CD8-positive, alpha-beta T cell (primary cell): ENCODE measurements at regions of chr1 and their contacts with region 1.

Region 1: GRCh38 chr1:109263597-109264398 is 14.5 kb downstream of the CELSR2 start:
- DNase-seq: peak; percentile 54 to 81 (median 75)
- ATAC-seq: peak; percentile 97
- H3K4me3 ChIP-seq: no peak overlapping the region
- H3K4me3 Mint-ChIP-seq: no peak overlapping the region
- H3K27ac ChIP-seq: no peak overlapping the region
- H3K27ac Mint-ChIP-seq: no peak overlapping the region
- H3K4me1 ChIP-seq: no peaks in the 10 kb centered on the region
- H3K4me1 Mint-ChIP-seq: no peaks in the 10 kb centered on the region
- H3K27me3 ChIP-seq: no peaks in the 10 kb centered on the region
- H3K27me3 Mint-ChIP-seq: no peaks in the 10 kb centered on the region
- CTCF ChIP-seq: peak; percentile 99

Region 2: GRCh38 chr1:109248797-109249642 is 14.8 kb before region 1 on chr1 and contains the start of gene CELSR2:
- CTCF ChIA-PET with region 1: interaction called, 21 read pairs
- POLR2A ChIA-PET with region 1: no interaction called
- intact Hi-C with region 1: no loop called
- DNase-seq: peak; percentile 21 to 83 (median 57)
- ATAC-seq: peak; percentile 97
- H3K4me3 ChIP-seq: peak within 1 kb of the TSS; percentile 39 to 41
- H3K4me3 Mint-ChIP-seq: peak within 1 kb of the TSS; percentile 72
- H3K27ac ChIP-seq: no peak within 1 kb of the TSS
- H3K27ac Mint-ChIP-seq: no peak within 1 kb of the TSS
- H3K4me1 ChIP-seq: peaks cover 14% of the 10 kb centered on the region
- H3K4me1 Mint-ChIP-seq: peaks cover 14% of the 10 kb centered on the region
- H3K27me3 ChIP-seq: peaks cover 0 to 3% of the 10 kb centered on the region in 2 experiments
- H3K27me3 Mint-ChIP-seq: peaks cover 8% of the 10 kb centered on the region
- CTCF ChIP-seq: no peak
- total RNA-seq, gene CELSR2: 3.8 TPM

Region 3: GRCh38 chr1:109371456-109371799 is 107.6 kb after region 1 on chr1:
- CTCF ChIA-PET with region 1: no interaction called
- POLR2A ChIA-PET with region 1: no interaction called
- intact Hi-C with region 1: no loop called
- DNase-seq: no peak
- ATAC-seq: no peak
- H3K4me3 ChIP-seq: no peak overlapping the region
- H3K4me3 Mint-ChIP-seq: no peak overlapping the region
- H3K27ac ChIP-seq: no peak overlapping the region
- H3K27ac Mint-ChIP-seq: no peak overlapping the region
- H3K4me1 ChIP-seq: no peaks in the 10 kb centered on the region
- H3K4me1 Mint-ChIP-seq: peaks cover 13% of the 10 kb centered on the region
- H3K27me3 ChIP-seq: peaks cover 0 to 5% of the 10 kb centered on the region in 2 experiments
- H3K27me3 Mint-ChIP-seq: peaks cover 9% of the 10 kb centered on the region
- CTCF ChIP-seq: no peak

Region 4: GRCh38 chr1:109397538-109398342 is 133.9 kb after region 1 on chr1 and contains the start of gene SORT1:
- CTCF ChIA-PET with region 1: interaction called, 87 read pairs
- POLR2A ChIA-PET with region 1: no interaction called
- intact Hi-C with region 1: loop called (anchors 1 kb)
- DNase-seq: peak; percentile 25 to 84 (median 71)
- ATAC-seq: peak; percentile 97
- H3K4me3 ChIP-seq: peak within 1 kb of the TSS; percentile 49 to 53
- H3K4me3 Mint-ChIP-seq: peak within 1 kb of the TSS; percentile 83
- H3K27ac ChIP-seq: no peak within 1 kb of the TSS
- H3K27ac Mint-ChIP-seq: no peak within 1 kb of the TSS
- H3K4me1 ChIP-seq: peaks cover 9% of the 10 kb centered on the region
- H3K4me1 Mint-ChIP-seq: peaks cover 15% of the 10 kb centered on the region
- H3K27me3 ChIP-seq: peaks cover 10 to 21% of the 10 kb centered on the region in 2 experiments
- H3K27me3 Mint-ChIP-seq: peaks cover 34% of the 10 kb centered on the region
- CTCF ChIP-seq: no peak
- total RNA-seq, gene SORT1: 0.61 to 0.73 TPM

Region 5: GRCh38 chr1:109493805-109494539 is 230.2 kb after region 1 on chr1 and contains the start of gene CYB561D1:
- CTCF ChIA-PET with region 1: interaction called, 8 read pairs
- POLR2A ChIA-PET with region 1: no interaction called
- intact Hi-C with region 1: loop called in 1 of 2 experiments (anchors 5 kb)
- DNase-seq: peak; percentile 79 to 95 (median 88)
- ATAC-seq: peak; percentile 90
- H3K4me3 ChIP-seq: peak within 1 kb of the TSS; percentile 94 to 95
- H3K4me3 Mint-ChIP-seq: peak within 1 kb of the TSS; percentile 95
- H3K27ac ChIP-seq: peak within 1 kb of the TSS; percentile 53 to 58
- H3K27ac Mint-ChIP-seq: peak within 1 kb of the TSS; percentile 85
- H3K4me1 ChIP-seq: peaks cover 49% of the 10 kb centered on the region
- H3K4me1 Mint-ChIP-seq: peaks cover 52% of the 10 kb centered on the region
- H3K27me3 ChIP-seq: no peaks in the 10 kb centered on the region
- H3K27me3 Mint-ChIP-seq: no peaks in the 10 kb centered on the region
- CTCF ChIP-seq: peak; percentile 88
- total RNA-seq, gene CYB561D1: 10.2 to 12.3 TPM